Activated T-helper 1 cell treated with anti-CD3 and anti-CD28 coated beads, Interleukin-12 subunit alpha, Interleukin-12 subunit beta, Interleukin-2, Interleukin-4 antibody, amounts not matched to agents 30 ng/mL and 10 ng/mL and 1 ng/mL, durations not matched to agents 14 hours and 24 hours and 36 hours (primary cell): ENCODE measurements at regions of chr12 and their contacts with region 1.

Region 1: GRCh38 chr12:107670999-107671643 is 14.5 kb upstream of the PWP1 start:
- DNase-seq: peak; percentile 29
- H3K4me3 Mint-ChIP-seq: no peak overlapping the region
- H3K27ac Mint-ChIP-seq: peak overlapping the region; percentile 64
- H3K4me1 Mint-ChIP-seq: peaks cover 8% of the 10 kb centered on the region
- H3K27me3 Mint-ChIP-seq: peaks cover 10% of the 10 kb centered on the region

Region 2: GRCh38 chr12:107131832-107132616 is 539.1 kb before region 1 on chr12:
- intact Hi-C with region 1: loop called (anchors 5 kb)
- DNase-seq: peak; percentile 6
- H3K4me3 Mint-ChIP-seq: no peak overlapping the region
- H3K27ac Mint-ChIP-seq: no peak overlapping the region
- H3K4me1 Mint-ChIP-seq: no peaks in the 10 kb centered on the region
- H3K27me3 Mint-ChIP-seq: no peaks in the 10 kb centered on the region

Region 3: GRCh38 chr12:107311682-107312081 is 359.4 kb before region 1 on chr12:
- intact Hi-C with region 1: loop called (anchors 5 kb)
- DNase-seq: no peak
- H3K4me3 Mint-ChIP-seq: no peak overlapping the region
- H3K27ac Mint-ChIP-seq: no peak overlapping the region
- H3K4me1 Mint-ChIP-seq: peaks cover 18% of the 10 kb centered on the region
- H3K27me3 Mint-ChIP-seq: peaks cover 34% of the 10 kb centered on the region

Region 4: DNA sequence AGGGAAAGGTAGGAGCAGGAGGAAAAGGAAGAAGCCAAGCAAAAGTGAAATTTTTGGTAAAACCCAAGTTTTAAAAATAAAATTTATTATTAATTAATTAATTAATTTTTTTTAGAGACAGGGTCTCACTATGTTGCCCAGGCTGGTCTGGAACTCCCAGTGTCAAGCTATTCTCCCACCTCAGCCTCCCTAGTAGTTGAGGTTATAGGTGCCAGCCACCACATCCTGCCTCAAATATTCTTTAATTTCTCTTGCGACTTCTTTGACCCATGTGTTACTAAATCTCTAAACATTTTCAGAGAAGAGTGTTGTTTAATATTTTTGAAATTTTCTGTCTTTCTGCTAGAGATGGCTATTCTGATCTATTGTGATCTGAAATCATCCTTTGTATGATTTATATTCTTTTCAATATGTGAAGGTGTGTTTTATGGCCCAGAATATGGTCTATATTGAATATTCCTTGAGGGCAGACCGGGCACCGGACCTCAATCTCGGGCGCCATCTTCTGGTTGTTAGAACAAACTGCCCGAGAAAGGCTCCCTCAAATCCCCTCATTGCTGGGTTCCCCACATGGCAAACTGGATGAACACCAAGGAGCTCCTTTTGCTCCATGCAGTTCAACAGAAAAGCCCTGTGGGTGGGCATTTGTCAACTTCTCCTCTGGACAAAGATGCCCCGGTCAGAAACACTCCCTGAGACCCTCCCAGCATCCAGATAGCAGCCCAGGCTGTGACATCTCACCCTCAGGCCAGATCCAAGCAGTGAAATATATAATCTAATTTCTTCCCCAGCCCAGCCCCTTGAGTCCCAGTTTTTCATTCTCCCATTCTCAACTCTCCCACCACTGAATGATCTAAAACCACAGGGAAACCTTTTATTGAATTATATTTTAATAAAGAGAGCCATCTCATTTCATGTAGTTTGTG is 213.9 kb after region 1 on chr12:
- intact Hi-C with region 1: loop called (anchors 1 kb)
- DNase-seq: peak; percentile 10
- H3K4me3 Mint-ChIP-seq: no peak overlapping the region
- H3K27ac Mint-ChIP-seq: no peak overlapping the region
- H3K4me1 Mint-ChIP-seq: no peaks in the 10 kb centered on the region
- H3K27me3 Mint-ChIP-seq: peaks cover 6% of the 10 kb centered on the region